ENCODE measurements at regions of chr17 and their contacts with region 1.

Region 1: GRCh38 chr17:80605326-80606066 is 60.9 kb downstream of the RPTOR start:
- DNase-seq: peak; percentile 90
- H3K4me3 ChIP-seq: no peak overlapping the region
- H3K27ac ChIP-seq: no peak overlapping the region
- H3K4me1 ChIP-seq: peaks cover 4% of the 10 kb centered on the region
- H3K27me3 ChIP-seq: no peaks in the 10 kb centered on the region
- CTCF ChIP-seq: peak in 1 of 2 donors; percentile 14

Region 2: DNA sequence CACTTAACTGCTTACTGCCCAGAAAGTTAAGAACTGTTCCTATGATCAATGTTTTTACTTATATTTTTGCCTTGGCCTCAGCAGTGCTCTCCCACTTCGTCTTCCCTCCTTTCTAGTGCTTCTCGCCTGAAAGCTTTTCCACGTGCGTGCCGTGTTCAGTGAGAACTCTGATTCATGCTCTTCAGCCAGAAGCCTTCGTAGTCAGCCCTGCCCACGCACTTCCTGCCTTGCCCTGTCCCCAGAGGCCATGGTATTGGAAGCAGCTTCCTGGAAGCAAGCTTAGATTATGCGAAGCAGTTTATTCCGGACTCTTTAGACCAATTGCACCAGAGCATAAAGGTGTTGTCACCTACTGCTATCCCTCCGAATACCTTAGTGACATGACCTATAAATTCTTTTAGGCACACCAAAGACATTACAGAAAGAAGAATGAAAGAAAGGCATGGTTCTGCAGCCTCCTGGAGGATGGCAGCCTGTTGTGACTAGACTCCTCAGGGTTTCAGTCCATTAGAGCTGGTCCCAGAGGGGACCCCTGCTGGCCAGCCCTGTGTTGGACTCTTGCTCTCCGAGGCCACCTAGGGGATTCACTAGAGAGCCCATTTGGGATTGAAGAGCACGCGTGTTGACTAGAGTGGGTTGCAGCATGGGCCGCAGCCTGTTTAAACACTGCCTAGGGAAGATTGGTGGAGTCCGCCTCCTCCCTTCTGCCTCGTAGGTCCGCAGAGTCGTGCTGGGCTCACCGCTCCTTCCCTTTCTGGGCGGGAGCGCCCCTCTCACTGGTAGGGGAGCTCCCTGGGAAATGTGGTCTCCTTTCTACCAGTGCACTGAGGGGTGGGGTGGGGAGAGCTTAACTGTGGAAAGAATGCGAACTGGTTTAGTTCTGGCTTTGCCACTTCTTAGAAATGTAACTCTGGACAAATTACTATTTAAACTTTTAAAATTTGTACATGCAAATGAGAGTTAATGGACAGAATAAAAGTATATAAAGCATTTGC is 44.5 kb after region 1 on chr17:
- CTCF ChIA-PET with region 1: no interaction called
- dilution Hi-C with region 1: loop called (anchors 5 kb)
- in situ Hi-C with region 1: no loop called
- intact Hi-C with region 1: no loop called
- DNase-seq: peak; percentile 74
- H3K4me3 ChIP-seq: no peak overlapping the region
- H3K27ac ChIP-seq: peak overlapping the region; percentile 83
- H3K4me1 ChIP-seq: peaks cover 36% of the 10 kb centered on the region
- H3K27me3 ChIP-seq: no peaks in the 10 kb centered on the region
- CTCF ChIP-seq: peak; percentile 36 to 45

Measured in mammary epithelial cell (primary cell).